Caco-2 (cell line): ENCODE measurements at regions of chr15 and their contacts with region 1.

Region 1: GRCh38 chr15:101540480-101541239 is 51.2 kb upstream of the PCSK6 start:
- DNase-seq: no peak
- H3K4me3 ChIP-seq: no peak overlapping the region
- H3K4me3 Mint-ChIP-seq: no peak overlapping the region
- H3K27ac Mint-ChIP-seq: no peak overlapping the region
- H3K4me1 ChIP-seq: no peaks in the 10 kb centered on the region
- H3K4me1 Mint-ChIP-seq: peaks cover 13% of the 10 kb centered on the region
- H3K27me3 ChIP-seq: no peaks in the 10 kb centered on the region
- H3K27me3 Mint-ChIP-seq: no peaks in the 10 kb centered on the region
- CTCF ChIP-seq: peak in 1 of 2 experiments; percentile 22

Region 2: GRCh38 chr15:101501703-101502373 is 38.8 kb before region 1 on chr15:
- CTCF ChIA-PET with region 1: no interaction called
- POLR2A ChIA-PET with region 1: no interaction called
- intact Hi-C with region 1: loop called (anchors 1 kb)
- DNase-seq: no peak
- H3K4me3 ChIP-seq: no peak overlapping the region
- H3K4me3 Mint-ChIP-seq: no peak overlapping the region
- H3K27ac Mint-ChIP-seq: no peak overlapping the region
- H3K4me1 ChIP-seq: peaks cover 11% of the 10 kb centered on the region
- H3K4me1 Mint-ChIP-seq: peaks cover 20% of the 10 kb centered on the region
- H3K27me3 ChIP-seq: no peaks in the 10 kb centered on the region
- H3K27me3 Mint-ChIP-seq: no peaks in the 10 kb centered on the region
- CTCF ChIP-seq: peak in 1 of 2 experiments; percentile 19